B cell (primary cell): ENCODE measurements at regions of chr1 and their contacts with region 1.

Region 1: GRCh38 chr1:39196244-39197215 is 8.0 kb upstream of the MACF1 start:
- DNase-seq: peak; percentile 61
- ATAC-seq: peak; percentile 53
- H3K4me3 ChIP-seq: peak overlapping the region in 1 of 5 experiments; percentile 55
- H3K4me3 Mint-ChIP-seq: peak overlapping the region; percentile 57
- H3K27ac ChIP-seq: peak overlapping the region; percentile 62 to 78
- H3K27ac Mint-ChIP-seq: peak overlapping the region; percentile 87
- H3K4me1 ChIP-seq: peaks cover 51 to 59% of the 10 kb centered on the region in 2 donors
- H3K4me1 Mint-ChIP-seq: peaks cover 57% of the 10 kb centered on the region
- H3K27me3 ChIP-seq: no peaks in the 10 kb centered on the region
- H3K27me3 Mint-ChIP-seq: no peaks in the 10 kb centered on the region
- CTCF ChIP-seq: no peak

Region 2: GRCh38 chr1:38344716-38345115 is 851.8 kb before region 1 on chr1:
- CTCF ChIA-PET with region 1: no interaction called
- POLR2A ChIA-PET with region 1: no interaction called
- intact Hi-C with region 1: no loop called
- DNase-seq: no peak
- ATAC-seq: no peak
- H3K4me3 ChIP-seq: no peak overlapping the region
- H3K4me3 Mint-ChIP-seq: no peak overlapping the region
- H3K27ac ChIP-seq: no peak overlapping the region
- H3K27ac Mint-ChIP-seq: no peak overlapping the region
- H3K4me1 ChIP-seq: no peaks in the 10 kb centered on the region
- H3K4me1 Mint-ChIP-seq: peaks cover 2% of the 10 kb centered on the region
- H3K27me3 ChIP-seq: peaks cover 0 to 4% (median 0%) of the 10 kb centered on the region in 4 experiments
- H3K27me3 Mint-ChIP-seq: peaks cover 10% of the 10 kb centered on the region
- CTCF ChIP-seq: no peak

Region 3: DNA sequence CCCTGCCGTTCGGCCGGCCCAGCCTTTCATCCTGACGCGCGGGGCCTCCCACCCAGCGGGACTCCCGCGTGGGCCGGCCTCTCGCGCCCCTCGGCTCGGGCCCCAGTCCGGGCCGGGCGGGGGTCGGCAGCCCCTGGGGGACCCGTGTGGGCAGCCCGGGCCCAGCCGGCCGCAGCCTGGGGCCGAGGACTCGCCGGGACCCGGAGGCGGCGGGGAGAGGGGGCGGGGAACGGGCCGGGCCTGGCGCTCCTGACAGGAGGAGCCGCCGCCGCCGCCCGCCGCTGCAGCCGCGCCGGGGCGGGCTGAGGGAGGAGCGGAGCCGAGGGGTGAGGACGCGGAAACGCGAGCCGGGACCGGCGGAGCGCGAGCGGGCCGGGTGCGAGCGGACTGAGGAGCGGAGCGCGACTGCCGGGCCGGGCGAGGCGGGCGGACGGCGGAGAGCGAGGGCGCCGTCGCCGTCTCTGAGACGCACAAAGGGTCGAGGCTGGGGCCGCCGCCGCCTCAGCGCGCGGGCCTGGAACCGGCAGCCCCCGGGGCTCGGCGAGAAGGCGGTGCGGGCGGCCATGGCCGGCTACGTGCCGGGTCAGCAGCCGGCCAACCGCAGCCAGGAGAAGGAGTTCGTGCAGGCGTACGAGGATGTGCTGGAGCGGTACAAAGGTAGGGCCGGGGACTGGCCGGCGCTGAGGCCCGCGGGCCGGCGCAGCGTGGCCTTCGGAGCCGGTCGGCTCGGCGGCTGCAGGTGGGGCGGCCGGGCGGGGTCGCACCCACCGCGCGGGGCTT is 91.3 kb before region 1 on chr1:
- CTCF ChIA-PET with region 1: interaction called, 203 read pairs
- POLR2A ChIA-PET with region 1: interaction called, 18 read pairs
- intact Hi-C with region 1: loop called (anchors 1 kb)
- DNase-seq: peak; percentile 64
- ATAC-seq: peak; percentile 35
- H3K4me3 ChIP-seq: peak overlapping the region in 4 of 5 experiments; percentile 52 to 78 (median 66)
- H3K4me3 Mint-ChIP-seq: peak overlapping the region; percentile 91
- H3K27ac ChIP-seq: no peak overlapping the region
- H3K27ac Mint-ChIP-seq: no peak overlapping the region
- H3K4me1 ChIP-seq: peaks cover 39 to 43% of the 10 kb centered on the region in 2 donors
- H3K4me1 Mint-ChIP-seq: peaks cover 28% of the 10 kb centered on the region
- H3K27me3 ChIP-seq: no peaks in the 10 kb centered on the region
- H3K27me3 Mint-ChIP-seq: no peaks in the 10 kb centered on the region
- CTCF ChIP-seq: no peak

Region 4: DNA sequence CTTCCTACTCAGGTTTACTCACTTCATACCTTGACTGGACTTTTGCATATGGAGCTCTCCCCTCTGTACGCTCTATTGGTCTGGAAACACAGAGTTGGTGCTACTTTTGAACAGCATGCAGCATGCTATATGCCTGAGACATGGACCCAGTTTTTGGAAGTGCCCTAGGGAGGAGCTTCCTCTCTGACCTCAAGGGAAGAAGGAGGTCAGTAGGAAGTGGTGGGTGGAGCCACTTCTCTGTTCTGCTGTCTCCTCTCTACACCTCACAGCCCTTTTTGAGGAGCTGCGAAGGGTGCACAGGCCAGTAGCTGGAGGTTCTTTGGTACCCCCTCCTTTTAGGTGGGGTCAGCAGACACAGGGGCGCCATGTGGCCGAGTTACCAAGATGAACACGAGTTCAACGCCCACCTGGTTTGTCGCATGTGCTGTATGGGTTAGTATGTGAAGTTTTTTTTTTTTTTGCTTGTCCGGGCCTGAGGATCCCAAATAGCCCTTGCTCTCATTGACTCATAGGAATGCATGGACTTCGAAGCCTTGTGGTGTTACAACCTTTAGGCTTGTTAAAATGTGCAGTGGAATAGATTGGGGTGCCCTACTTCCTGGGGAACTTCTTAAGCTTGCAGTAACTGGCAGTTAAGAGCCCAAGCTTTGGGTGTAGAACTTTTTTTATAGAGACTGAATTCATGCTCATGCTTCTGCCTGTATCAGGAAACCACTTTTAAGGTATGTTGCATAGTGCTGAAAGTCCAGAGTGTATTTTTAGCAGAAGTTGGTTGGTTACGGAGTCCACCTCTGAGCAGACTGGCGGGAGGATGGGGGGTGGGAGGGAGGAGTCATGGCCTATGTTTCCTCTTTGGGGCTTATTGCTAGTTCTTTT is 18.7 kb after region 1 on chr1:
- CTCF ChIA-PET with region 1: interaction called, 101 read pairs
- POLR2A ChIA-PET with region 1: interaction called, 6 read pairs
- intact Hi-C with region 1: loop called (anchors 2 kb)
- DNase-seq: peak; percentile 77
- ATAC-seq: peak; percentile 81
- H3K4me3 ChIP-seq: peak overlapping the region; percentile 45 to 79 (median 61)
- H3K4me3 Mint-ChIP-seq: peak overlapping the region; percentile 89
- H3K27ac ChIP-seq: peak overlapping the region; percentile 70 to 92
- H3K27ac Mint-ChIP-seq: peak overlapping the region; percentile 91
- H3K4me1 ChIP-seq: peaks cover 36 to 44% of the 10 kb centered on the region in 2 donors
- H3K4me1 Mint-ChIP-seq: peaks cover 49% of the 10 kb centered on the region
- H3K27me3 ChIP-seq: no peaks in the 10 kb centered on the region
- H3K27me3 Mint-ChIP-seq: no peaks in the 10 kb centered on the region
- CTCF ChIP-seq: no peak

Region 5: GRCh38 chr1:39230261-39231190 is 34.0 kb after region 1 on chr1:
- CTCF ChIA-PET with region 1: interaction called, 30 read pairs
- POLR2A ChIA-PET with region 1: no interaction called
- intact Hi-C with region 1: loop called (anchors 1 kb)
- DNase-seq: peak; percentile 77
- ATAC-seq: peak; percentile 95
- H3K4me3 ChIP-seq: no peak overlapping the region
- H3K4me3 Mint-ChIP-seq: peak overlapping the region; percentile 52
- H3K27ac ChIP-seq: peak overlapping the region; percentile 63 to 83
- H3K27ac Mint-ChIP-seq: peak overlapping the region; percentile 91
- H3K4me1 ChIP-seq: peaks cover 22 to 23% of the 10 kb centered on the region in 2 donors
- H3K4me1 Mint-ChIP-seq: peaks cover 39% of the 10 kb centered on the region
- H3K27me3 ChIP-seq: no peaks in the 10 kb centered on the region
- H3K27me3 Mint-ChIP-seq: no peaks in the 10 kb centered on the region
- CTCF ChIP-seq: no peak

Region 6: GRCh38 chr1:39250460-39251240 is 54.1 kb after region 1 on chr1:
- CTCF ChIA-PET with region 1: interaction called, 439 read pairs
- POLR2A ChIA-PET with region 1: interaction called, 4 read pairs
- intact Hi-C with region 1: no loop called
- DNase-seq: no peak
- ATAC-seq: no peak
- H3K4me3 ChIP-seq: no peak overlapping the region
- H3K4me3 Mint-ChIP-seq: no peak overlapping the region
- H3K27ac ChIP-seq: no peak overlapping the region
- H3K27ac Mint-ChIP-seq: peak overlapping the region; percentile 5
- H3K4me1 ChIP-seq: no peaks in the 10 kb centered on the region
- H3K4me1 Mint-ChIP-seq: peaks cover 2% of the 10 kb centered on the region
- H3K27me3 ChIP-seq: no peaks in the 10 kb centered on the region
- H3K27me3 Mint-ChIP-seq: no peaks in the 10 kb centered on the region
- CTCF ChIP-seq: no peak

Region 7: DNA sequence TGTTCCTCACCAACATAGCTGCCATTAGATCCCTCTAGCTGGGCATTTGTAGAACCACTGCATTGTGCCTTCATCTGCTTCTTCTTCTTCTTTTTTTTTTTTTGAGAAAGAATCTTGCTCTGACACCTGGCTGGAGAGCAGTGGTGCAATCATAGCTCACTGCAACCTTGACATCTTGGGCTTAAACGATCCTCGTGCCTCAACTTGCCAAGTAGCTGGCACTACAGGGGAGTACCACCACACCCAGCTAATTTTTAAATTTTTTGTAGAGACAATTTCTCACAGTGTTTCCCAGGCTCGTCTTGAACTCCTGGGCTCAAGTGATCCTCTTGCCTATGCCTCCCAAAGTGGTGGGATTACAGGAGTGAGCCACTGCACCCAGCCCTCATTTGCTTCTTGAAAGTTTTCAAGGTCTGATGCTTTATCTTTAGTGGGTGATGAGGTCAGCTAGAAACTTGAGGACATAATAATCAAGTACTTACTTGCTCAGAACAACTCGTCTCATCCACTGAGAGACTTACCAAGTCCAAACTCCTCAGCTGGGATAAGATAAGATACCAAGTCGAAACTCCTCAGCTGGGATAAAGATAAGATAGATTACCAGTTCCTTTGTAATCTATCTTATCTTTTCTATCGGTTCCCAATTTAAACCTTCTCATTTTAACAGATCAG is 79.4 kb after region 1 on chr1:
- CTCF ChIA-PET with region 1: interaction called, 89 read pairs
- POLR2A ChIA-PET with region 1: no interaction called
- intact Hi-C with region 1: no loop called
- DNase-seq: no peak
- ATAC-seq: no peak
- H3K4me3 ChIP-seq: no peak overlapping the region
- H3K4me3 Mint-ChIP-seq: no peak overlapping the region
- H3K27ac ChIP-seq: peak overlapping the region in 1 of 2 donors; percentile 16
- H3K27ac Mint-ChIP-seq: no peak overlapping the region
- H3K4me1 ChIP-seq: peaks cover 26 to 34% of the 10 kb centered on the region in 2 donors
- H3K4me1 Mint-ChIP-seq: peaks cover 55% of the 10 kb centered on the region
- H3K27me3 ChIP-seq: no peaks in the 10 kb centered on the region
- H3K27me3 Mint-ChIP-seq: no peaks in the 10 kb centered on the region
- CTCF ChIP-seq: no peak

Region 8: GRCh38 chr1:39408641-39409054 is 212.1 kb after region 1 on chr1:
- CTCF ChIA-PET with region 1: interaction called, 12 read pairs
- POLR2A ChIA-PET with region 1: no interaction called
- intact Hi-C with region 1: loop called (anchors 5 kb)
- DNase-seq: peak; percentile 87
- ATAC-seq: peak; percentile 86
- H3K4me3 ChIP-seq: peak overlapping the region in 4 of 5 experiments; percentile 47 to 70 (median 64)
- H3K4me3 Mint-ChIP-seq: peak overlapping the region; percentile 90
- H3K27ac ChIP-seq: peak overlapping the region in 1 of 2 donors; percentile 54
- H3K27ac Mint-ChIP-seq: no peak overlapping the region
- H3K4me1 ChIP-seq: peaks cover 16 to 19% of the 10 kb centered on the region in 2 donors
- H3K4me1 Mint-ChIP-seq: peaks cover 30% of the 10 kb centered on the region
- H3K27me3 ChIP-seq: no peaks in the 10 kb centered on the region
- H3K27me3 Mint-ChIP-seq: no peaks in the 10 kb centered on the region
- CTCF ChIP-seq: no peak